ENCODE measurements at regions of chr19 and their contacts with region 1.

Region 1: GRCh38 chr19:12365236-12366162 is at the start of gene ZNF442:
- DNase-seq: peak; percentile 99
- ATAC-seq: peak; percentile 97
- H3K4me3 ChIP-seq: peak within 1 kb of the TSS; percentile 75 to 90 (median 89)
- H3K27ac ChIP-seq: peak within 1 kb of the TSS; percentile 81
- H3K4me1 ChIP-seq: peaks cover 24% of the 10 kb centered on the region
- H3K27me3 ChIP-seq: no peaks in the 10 kb centered on the region
- CTCF ChIP-seq: peak; percentile 86
- EP300 ChIP-seq: no peak
- POLR2A ChIP-seq: peak; percentile 89 to 95
- RAD21 ChIP-seq: peak; percentile 87
- total RNA-seq, gene ZNF442: 6.0 and 8.6 TPM in 2 replicates

Region 2: GRCh38 chr19:12162882-12163806 is 202.4 kb before region 1 on chr19 and contains the start of gene ZNF136:
- CTCF ChIA-PET with region 1: no interaction called
- POLR2A ChIA-PET with region 1: interaction called, 10 read pairs
- in situ Hi-C with region 1: no loop called
- intact Hi-C with region 1: no loop called
- DNase-seq: peak; percentile 94
- ATAC-seq: peak; percentile 96
- H3K4me3 ChIP-seq: peak within 1 kb of the TSS; percentile 72 to 92 (median 90)
- H3K27ac ChIP-seq: peak within 1 kb of the TSS; percentile 94
- H3K4me1 ChIP-seq: peaks cover 60% of the 10 kb centered on the region
- H3K27me3 ChIP-seq: no peaks in the 10 kb centered on the region; a peak in 1 of 5 replicates
- CTCF ChIP-seq: 0 out of 2 replicates have a peak, but pooled peaks have one; percentile 7
- EP300 ChIP-seq: no peak
- POLR2A ChIP-seq: peak; percentile 77 to 81
- RAD21 ChIP-seq: no peak
- total RNA-seq, gene ZNF136: 10.2 and 16.6 TPM in 2 replicates

Region 3: DNA sequence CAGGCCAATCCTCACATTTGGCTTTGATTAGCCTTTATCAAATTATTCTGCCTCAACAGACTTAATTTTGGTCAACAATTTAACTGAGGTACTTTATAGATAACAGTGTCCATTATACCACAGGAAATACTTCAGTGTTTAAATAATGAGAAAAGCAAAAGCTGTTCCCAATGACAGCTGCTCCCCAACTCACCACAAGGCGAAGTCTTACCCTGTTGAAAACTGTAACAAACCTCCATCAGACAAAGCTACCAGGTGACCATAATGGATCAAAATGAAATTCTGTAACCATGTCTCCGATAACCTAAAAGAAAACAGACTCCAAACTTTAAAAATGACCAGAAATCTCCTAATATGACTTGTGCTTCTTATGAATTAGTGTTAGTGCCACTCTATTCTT is 121.1 kb before region 1 on chr19:
- CTCF ChIA-PET with region 1: no interaction called
- POLR2A ChIA-PET with region 1: no interaction called
- in situ Hi-C with region 1: no loop called
- intact Hi-C with region 1: loop called (anchors 5 kb)
- DNase-seq: peak; percentile 21
- ATAC-seq: peak; percentile 57
- H3K4me3 ChIP-seq: no peak overlapping the region
- H3K27ac ChIP-seq: no peak overlapping the region
- H3K4me1 ChIP-seq: no peaks in the 10 kb centered on the region
- H3K27me3 ChIP-seq: no peaks in the 10 kb centered on the region
- CTCF ChIP-seq: peak; percentile 61
- EP300 ChIP-seq: no peak
- POLR2A ChIP-seq: no peak
- RAD21 ChIP-seq: peak; percentile 51; the same call in 1 of the 2 replicates

Region 4: GRCh38 chr19:12333162-12334159 is 32.0 kb before region 1 on chr19 and contains the start of gene ZNF563:
- CTCF ChIA-PET with region 1: no interaction called
- POLR2A ChIA-PET with region 1: interaction called, 79 read pairs
- in situ Hi-C with region 1: no loop called
- intact Hi-C with region 1: loop called (anchors 2 kb)
- DNase-seq: peak; percentile 94
- ATAC-seq: peak; percentile 94
- H3K4me3 ChIP-seq: peak within 1 kb of the TSS; percentile 95 to 99 (median 98)
- H3K27ac ChIP-seq: peak within 1 kb of the TSS; percentile 95
- H3K4me1 ChIP-seq: peaks cover 43% of the 10 kb centered on the region
- H3K27me3 ChIP-seq: no peaks in the 10 kb centered on the region; a peak in 1 of 5 replicates
- CTCF ChIP-seq: no peak; the same call in 1 of the 2 replicates
- EP300 ChIP-seq: 0 out of 4 replicates have a peak, but pooled peaks of 1 of the 2 experiments have one; percentile 44
- POLR2A ChIP-seq: peak; percentile 97 to 98
- RAD21 ChIP-seq: peak; percentile 42
- total RNA-seq, gene ZNF563: 19.5 and 26.3 TPM in 2 replicates

Region 5: GRCh38 chr19:12440541-12441316 is 75.2 kb after region 1 on chr19 and contains the start of gene ZNF443:
- CTCF ChIA-PET with region 1: no interaction called
- POLR2A ChIA-PET with region 1: interaction called, 10 read pairs
- in situ Hi-C with region 1: no loop called
- intact Hi-C with region 1: no loop called
- DNase-seq: peak; percentile 99
- ATAC-seq: peak; percentile 96
- H3K4me3 ChIP-seq: peak within 1 kb of the TSS; percentile 72 to 96 (median 83)
- H3K27ac ChIP-seq: peak within 1 kb of the TSS; percentile 97
- H3K4me1 ChIP-seq: peaks cover 27% of the 10 kb centered on the region
- H3K27me3 ChIP-seq: no peaks in the 10 kb centered on the region
- CTCF ChIP-seq: no peak
- EP300 ChIP-seq: peak in 1 of 2 experiments; percentile 56; a peak in 2 of 4 replicates
- POLR2A ChIP-seq: peak; percentile 84 to 91
- RAD21 ChIP-seq: 0 out of 2 replicates have a peak, but pooled peaks have one; percentile 37
- total RNA-seq, gene ZNF443: 19.0 and 24.2 TPM in 2 replicates

Measured in HepG2 (cell line).